GM13976 (cell line): ENCODE measurements at regions of chr5 and their contacts with region 1.

Region 1: DNA sequence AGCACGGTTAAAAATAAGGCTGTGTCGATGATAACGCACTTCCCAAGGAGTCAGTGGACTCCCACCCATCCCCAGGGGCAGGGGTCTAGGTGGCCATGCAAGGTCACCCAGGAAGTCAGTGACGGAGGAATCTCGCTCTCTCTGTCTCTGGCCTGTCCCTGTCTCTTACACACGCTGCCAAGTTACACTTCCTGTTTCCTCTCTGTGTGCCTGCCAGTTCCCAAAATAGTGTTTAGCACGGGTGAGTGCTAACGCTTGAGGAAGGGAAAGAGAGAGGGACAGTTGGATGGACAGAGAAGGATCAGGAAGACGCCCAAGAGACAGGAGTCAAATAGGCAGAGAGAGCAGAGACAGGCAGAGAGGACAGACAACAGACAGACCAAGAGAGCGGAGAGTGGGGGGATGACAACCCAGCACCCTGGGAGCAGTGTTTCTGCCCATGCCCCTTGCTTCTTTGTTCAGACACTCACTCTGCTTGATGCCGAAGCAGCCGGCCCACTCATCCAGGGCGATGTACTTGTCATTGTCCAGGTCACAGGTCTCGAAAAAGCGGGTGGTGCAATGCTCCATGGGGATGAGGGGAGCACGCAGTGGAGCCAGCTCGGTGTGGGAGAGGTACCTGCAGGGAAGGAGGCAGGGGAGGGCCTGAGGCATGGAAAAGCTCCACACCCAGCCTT is 23.0 kb downstream of the SPARC start:
- DNase-seq: no peak
- CTCF ChIP-seq: no peak

Region 2: GRCh38 chr5:151719228-151720000 is 55.7 kb after region 1 on chr5:
- in situ Hi-C with region 1: loop called (anchors 10 kb)
- DNase-seq: no peak
- CTCF ChIP-seq: peak; percentile 56

Region 3: GRCh38 chr5:151740336-151740942 is 76.7 kb after region 1 on chr5:
- in situ Hi-C with region 1: loop called (anchors 5 kb)
- DNase-seq: peak; percentile 67
- CTCF ChIP-seq: peak; percentile 64